HepG2 (cell line): ENCODE measurements at regions of chr12 and their contacts with region 1.

Region 1: DNA sequence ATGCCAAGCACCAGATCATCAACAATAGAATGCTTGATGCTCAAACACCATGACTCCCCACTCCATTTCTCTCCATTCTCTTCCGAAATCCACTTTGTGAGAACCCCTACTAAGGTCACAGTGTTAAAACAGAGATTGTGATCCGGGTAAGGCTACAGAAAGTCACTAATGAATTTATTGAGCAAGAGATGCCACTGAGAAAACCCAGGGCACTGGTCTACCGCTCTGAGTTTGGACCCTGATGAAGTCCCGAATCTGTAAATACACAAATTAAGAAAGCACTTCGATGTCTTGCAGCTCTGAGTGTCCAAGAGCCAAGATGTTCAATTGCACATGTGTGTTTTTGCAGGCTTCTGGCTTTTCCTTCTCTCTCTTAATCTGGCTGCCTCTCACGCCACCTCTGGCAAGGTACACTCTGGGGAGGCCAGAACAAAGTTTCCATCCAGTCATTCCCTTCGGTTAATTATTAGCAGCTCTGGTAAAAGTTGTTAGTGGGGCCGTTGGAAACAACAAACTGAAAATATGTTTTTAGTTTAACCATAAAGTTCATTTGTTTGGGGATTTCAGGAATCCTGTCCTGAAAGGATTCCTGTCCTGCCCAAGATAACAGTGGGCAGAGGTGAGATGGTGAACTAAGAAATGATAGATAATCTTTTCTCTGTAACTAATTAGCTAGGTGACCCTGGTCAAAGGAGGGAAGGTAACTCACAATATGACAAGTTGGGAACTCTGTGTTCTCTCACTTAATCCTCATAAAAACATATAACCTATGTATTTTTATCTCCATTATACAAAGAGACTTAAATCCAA is 75.4 kb downstream of the BTG1 start:
- DNase-seq: peak; percentile 81
- ATAC-seq: peak; percentile 95
- H3K4me3 ChIP-seq: peak overlapping the region; percentile 34 to 58 (median 51); a peak in 5 of 6 replicates
- H3K27ac ChIP-seq: peak overlapping the region; percentile 96
- H3K4me1 ChIP-seq: peaks cover 58% of the 10 kb centered on the region
- H3K27me3 ChIP-seq: no peaks in the 10 kb centered on the region
- CTCF ChIP-seq: peak; percentile 58
- EP300 ChIP-seq: peak in 1 of 2 experiments; percentile 65; a peak in 1 of 4 replicates
- POLR2A ChIP-seq: 0 out of 4 replicates have a peak, but pooled peaks of 1 of the 2 experiments have one; percentile 40
- RAD21 ChIP-seq: 0 out of 2 replicates have a peak, but pooled peaks have one; percentile 31

Region 2: GRCh38 chr12:92136965-92137721 is 66.9 kb after region 1 on chr12:
- CTCF ChIA-PET with region 1: no interaction called
- POLR2A ChIA-PET with region 1: interaction called, 13 read pairs
- in situ Hi-C with region 1: no loop called
- intact Hi-C with region 1: loop called (anchors 2 kb)
- DNase-seq: peak; percentile 65
- ATAC-seq: peak; percentile 86
- H3K4me3 ChIP-seq: peak overlapping the region in 1 of 3 experiments; percentile 14; a peak in 1 of 6 replicates
- H3K27ac ChIP-seq: peak overlapping the region; percentile 42
- H3K4me1 ChIP-seq: peaks cover 63% of the 10 kb centered on the region
- H3K27me3 ChIP-seq: no peaks in the 10 kb centered on the region
- CTCF ChIP-seq: no peak
- EP300 ChIP-seq: 0 out of 4 replicates have a peak, but pooled peaks of 1 of the 2 experiments have one; percentile 12
- POLR2A ChIP-seq: no peak
- RAD21 ChIP-seq: no peak